Naive thymus-derived CD4-positive, alpha-beta T cell (primary cell): ENCODE measurements at regions of chr2 and their contacts with region 1.

Region 1: DNA sequence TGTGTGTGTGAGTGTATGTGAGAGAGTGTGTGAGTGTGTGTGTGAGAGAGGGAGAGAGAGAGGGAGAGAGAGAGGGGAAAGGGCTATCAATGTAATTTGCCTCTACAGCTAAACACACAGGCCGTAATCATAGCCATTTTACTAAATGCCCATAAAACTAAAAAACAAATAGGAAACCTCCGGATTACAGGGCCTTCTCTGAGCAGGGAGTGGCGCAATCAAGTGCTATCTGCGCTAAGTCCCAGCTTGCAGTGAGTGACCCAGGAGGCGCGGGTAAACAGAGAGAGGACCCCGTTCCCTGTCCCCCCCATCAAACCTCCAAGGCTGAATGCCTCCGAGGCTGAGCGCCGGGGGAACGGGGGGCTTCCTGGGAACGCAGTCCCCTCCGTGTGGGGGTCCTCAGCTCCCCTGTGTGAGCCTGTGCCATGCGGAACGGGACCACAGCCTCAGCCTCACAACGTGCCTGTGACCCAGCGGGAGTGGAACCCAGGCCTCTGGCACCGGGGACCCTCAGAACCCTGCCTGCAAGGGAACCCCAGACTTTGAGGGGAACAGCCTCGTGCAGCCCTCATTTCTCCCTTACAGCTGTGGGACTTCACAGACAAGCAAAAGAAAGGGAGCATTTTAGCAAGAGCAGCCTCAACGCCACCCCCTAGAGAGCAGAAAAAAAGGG is 54.7 kb upstream of the ID2 start:
- DNase-seq: no peak
- ATAC-seq: no peak
- H3K4me3 ChIP-seq: no peak overlapping the region
- H3K4me3 Mint-ChIP-seq: no peak overlapping the region
- H3K27ac ChIP-seq: no peak overlapping the region
- H3K27ac Mint-ChIP-seq: no peak overlapping the region
- H3K4me1 ChIP-seq: no peaks in the 10 kb centered on the region
- H3K4me1 Mint-ChIP-seq: peaks cover 0 to 10% (median 5%) of the 10 kb centered on the region in 7 donors
- H3K27me3 ChIP-seq: no peaks in the 10 kb centered on the region
- H3K27me3 Mint-ChIP-seq: peaks cover 0 to 5% (median 0%) of the 10 kb centered on the region in 5 donors

Region 2: DNA sequence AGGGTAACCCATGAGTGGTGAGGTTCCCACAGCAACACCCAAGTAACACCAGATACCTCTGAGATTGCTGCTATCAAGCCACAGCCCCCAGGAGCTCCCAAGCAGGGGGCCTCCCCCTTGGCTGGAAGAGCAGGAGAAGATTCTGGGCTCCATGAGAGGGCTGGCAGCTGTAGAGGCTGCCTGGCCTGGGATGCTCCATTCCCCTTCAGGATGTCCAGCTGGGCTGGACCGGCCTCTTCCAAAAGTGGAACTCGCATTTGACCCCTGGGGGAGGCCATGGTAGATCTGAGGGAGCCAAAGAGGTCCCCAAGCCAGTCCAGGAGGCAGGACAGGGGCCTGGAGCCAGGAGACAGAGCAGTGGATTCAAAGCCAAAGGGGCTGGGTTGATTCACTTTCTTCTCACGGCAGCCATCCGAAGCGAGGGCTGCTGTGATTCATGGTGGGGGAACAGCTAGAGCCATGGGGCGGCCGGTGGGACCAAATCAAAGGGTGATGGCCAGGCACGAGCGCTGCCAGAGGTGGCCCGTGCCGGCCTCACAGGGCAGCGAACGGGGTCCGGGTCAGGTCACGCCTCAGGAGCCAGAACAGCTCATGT is 40.6 kb before region 1 on chr2:
- CTCF ChIA-PET with region 1: no interaction called
- POLR2A ChIA-PET with region 1: interaction called, 3 read pairs
- intact Hi-C with region 1: loop called in 1 of 2 experiments (anchors 1 kb)
- DNase-seq: no peak
- ATAC-seq: no peak
- H3K4me3 ChIP-seq: no peak overlapping the region
- H3K4me3 Mint-ChIP-seq: peak overlapping the region in 1 of 10 donors; percentile 21
- H3K27ac ChIP-seq: no peak overlapping the region
- H3K27ac Mint-ChIP-seq: peak overlapping the region in 1 of 9 donors; percentile 49
- H3K4me1 ChIP-seq: peaks cover 0 to 12% of the 10 kb centered on the region in 2 donors
- H3K4me1 Mint-ChIP-seq: peaks cover 8 to 25% (median 11%) of the 10 kb centered on the region in 7 donors
- H3K27me3 ChIP-seq: no peaks in the 10 kb centered on the region
- H3K27me3 Mint-ChIP-seq: peaks cover 0 to 25% (median 7%) of the 10 kb centered on the region in 5 donors